ENCODE measurements at regions of chr7 and their contacts with region 1.

Region 1: DNA sequence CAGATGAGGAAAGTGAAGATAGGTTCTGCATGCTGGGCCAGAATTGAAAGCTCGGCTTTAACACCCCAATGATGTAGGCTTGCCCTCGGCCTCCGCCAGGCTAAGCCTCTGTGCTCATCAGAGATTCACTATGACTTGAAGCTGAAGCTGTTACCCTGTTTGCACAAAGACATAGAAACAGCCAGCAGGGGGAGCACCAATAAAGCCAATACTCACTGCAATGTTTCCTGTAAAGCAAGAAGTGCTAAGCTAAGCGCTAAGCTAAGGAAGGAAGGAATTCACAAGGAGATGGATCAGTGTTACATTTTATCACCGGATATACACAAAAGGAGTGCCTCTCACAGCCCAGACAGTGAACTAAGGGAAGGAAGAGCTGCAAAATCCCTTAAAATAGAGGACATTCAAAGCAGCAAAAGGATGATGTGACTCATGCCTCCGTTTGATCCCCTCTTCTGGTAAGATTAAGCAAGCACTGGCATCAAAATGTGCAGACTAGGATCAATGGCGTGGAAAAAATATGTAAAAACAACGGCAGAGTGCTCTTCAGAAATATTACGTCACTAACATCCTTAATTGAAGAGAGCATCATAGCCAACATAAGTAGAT is 153.8 kb downstream of the COBL start:
- DNase-seq: peak in 4 of 5 donors; percentile 84 to 95 (median 91)
- H3K4me3 ChIP-seq: no peak overlapping the region
- H3K27ac ChIP-seq: no peak overlapping the region
- H3K4me1 ChIP-seq: peaks cover 0 to 4% (median 0%) of the 10 kb centered on the region in 3 donors
- H3K27me3 ChIP-seq: no peaks in the 10 kb centered on the region
- CTCF ChIP-seq: peak; percentile 80

Region 2: GRCh38 chr7:51366930-51367613 is 204.2 kb after region 1 on chr7:
- intact Hi-C with region 1: loop called (anchors 10 kb)
- DNase-seq: peak in 4 of 5 donors; percentile 69 to 74 (median 70)
- H3K4me3 ChIP-seq: no peak overlapping the region
- H3K27ac ChIP-seq: no peak overlapping the region
- H3K4me1 ChIP-seq: no peaks in the 10 kb centered on the region
- H3K27me3 ChIP-seq: no peaks in the 10 kb centered on the region
- CTCF ChIP-seq: peak; percentile 95

Measured in kidney (tissue), 22 donors.